ENCODE measurements at regions of chr6 and their contacts with region 1.

Region 1: DNA sequence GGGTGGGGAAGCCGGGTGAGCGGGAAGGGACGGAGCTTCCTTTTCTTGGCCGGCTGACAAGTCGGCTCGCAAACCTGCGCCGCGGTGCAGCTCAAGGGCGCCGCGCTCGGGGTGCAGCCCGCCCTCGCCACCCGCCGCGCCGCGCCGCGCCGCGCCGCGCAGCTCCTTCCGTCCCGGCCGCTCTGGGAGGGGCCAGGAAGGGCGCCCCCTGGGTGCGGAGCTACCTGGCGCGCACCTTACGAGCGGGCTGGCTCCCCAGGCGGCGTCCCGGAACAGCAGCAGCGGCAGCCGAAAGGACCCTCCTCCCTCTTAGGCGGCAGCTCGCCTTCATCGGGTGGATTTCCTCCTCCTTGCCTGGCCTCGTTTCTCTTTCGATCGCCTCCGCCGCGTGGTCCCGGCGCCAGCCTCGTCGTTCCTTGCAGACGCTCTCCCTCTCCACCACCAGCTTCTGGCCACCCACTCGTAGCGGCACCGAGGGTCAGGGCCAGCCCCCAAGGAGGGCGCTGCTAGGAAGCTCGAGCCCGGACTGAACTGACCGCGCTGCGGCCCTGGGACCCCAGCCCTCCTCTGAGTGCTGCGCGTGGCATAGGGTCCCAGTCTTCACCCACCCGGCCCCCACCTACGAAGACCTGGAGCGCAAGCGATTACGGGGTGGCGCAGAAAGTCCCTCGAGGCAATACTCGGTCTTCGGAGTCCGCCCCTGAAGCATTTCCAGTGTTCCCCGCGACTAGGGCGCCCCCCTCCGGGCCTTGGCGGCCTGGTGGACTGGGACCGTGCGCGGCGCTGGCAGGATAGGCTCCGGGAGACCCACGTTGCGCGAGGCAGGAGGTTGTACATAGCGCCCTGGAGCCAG is at the start of gene MAP3K5:
- DNase-seq: peak; percentile 80

Region 2: GRCh38 chr6:136643850-136644596 is 148.6 kb before region 1 on chr6:
- CTCF ChIA-PET with region 1: interaction called, 102 read pairs
- POLR2A ChIA-PET with region 1: interaction called, 41 read pairs
- DNase-seq: peak; percentile 85

Region 3: DNA sequence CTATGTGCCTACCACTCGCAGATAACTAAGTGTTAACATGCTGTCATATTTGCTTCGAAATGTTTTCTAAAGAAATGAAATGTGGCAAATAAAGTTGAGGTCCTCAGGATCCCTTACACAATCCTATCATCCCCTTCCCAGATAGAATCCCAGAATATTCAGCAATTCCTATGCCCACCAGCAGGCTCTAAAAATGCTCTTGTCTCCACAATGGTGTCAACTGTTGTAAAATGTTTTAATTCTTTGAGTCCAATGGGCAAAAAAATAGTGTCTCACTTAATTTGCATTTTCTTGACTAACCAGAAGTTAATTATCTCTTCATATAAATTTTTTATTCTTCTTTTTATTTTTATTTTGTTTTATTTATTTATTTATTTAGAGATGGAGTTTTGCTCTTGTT is 138.6 kb before region 1 on chr6:
- CTCF ChIA-PET with region 1: interaction called, 11 read pairs
- POLR2A ChIA-PET with region 1: interaction called, 3 read pairs
- DNase-seq: peak; percentile 17

Region 4: DNA sequence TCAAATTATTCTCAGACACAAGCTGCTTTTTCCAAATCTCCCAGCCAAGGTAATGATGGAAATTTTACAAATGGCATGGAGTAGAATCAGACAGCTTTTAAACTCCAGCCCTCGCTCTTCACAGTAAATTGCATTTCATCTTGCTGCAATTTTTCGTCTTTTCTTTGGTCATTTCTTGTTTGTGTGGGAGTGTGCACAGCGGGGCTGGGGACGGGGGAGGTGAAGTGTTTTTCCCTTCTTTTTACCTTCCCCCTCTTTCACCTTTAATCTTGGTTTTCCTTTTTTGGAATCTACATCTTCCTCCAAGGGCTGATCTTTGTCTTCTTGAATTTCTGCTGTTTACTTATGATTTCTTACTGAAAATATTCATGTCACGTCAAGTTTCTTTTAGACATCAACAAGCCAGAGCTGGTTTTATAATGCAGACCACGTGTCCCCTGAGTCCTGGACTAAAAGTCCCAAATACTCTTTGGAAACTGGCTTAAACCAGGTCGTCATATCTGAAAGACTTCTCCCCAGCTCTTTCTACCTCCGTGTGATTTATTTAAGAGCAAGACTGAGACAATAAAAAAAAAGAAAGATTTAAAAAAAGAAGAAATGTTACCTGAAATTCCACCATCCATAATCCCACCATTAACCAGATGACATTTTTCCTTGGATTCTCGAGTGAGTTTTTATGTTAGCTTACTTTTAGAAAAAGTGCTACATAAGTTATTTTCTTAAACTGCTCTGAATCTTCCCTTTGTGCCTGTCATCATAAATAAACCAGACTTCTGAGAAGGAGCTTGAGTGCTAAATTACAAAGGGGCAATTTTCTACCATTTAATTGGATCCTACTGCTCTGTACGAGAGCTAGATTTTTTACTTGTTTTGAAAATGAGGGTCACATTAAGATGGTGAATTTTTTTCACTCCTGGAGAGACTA is 52.3 kb before region 1 on chr6:
- CTCF ChIA-PET with region 1: interaction called, 15 read pairs
- POLR2A ChIA-PET with region 1: interaction called, 4 read pairs
- DNase-seq: no peak

Measured in HEK293T (cell line).